Activated CD4-positive, alpha-beta T cell treated with anti-CD3 and anti-CD28 coated beads for 36 hours (primary cell): ENCODE measurements at regions of chr3 and their contacts with region 1.

Region 1: DNA sequence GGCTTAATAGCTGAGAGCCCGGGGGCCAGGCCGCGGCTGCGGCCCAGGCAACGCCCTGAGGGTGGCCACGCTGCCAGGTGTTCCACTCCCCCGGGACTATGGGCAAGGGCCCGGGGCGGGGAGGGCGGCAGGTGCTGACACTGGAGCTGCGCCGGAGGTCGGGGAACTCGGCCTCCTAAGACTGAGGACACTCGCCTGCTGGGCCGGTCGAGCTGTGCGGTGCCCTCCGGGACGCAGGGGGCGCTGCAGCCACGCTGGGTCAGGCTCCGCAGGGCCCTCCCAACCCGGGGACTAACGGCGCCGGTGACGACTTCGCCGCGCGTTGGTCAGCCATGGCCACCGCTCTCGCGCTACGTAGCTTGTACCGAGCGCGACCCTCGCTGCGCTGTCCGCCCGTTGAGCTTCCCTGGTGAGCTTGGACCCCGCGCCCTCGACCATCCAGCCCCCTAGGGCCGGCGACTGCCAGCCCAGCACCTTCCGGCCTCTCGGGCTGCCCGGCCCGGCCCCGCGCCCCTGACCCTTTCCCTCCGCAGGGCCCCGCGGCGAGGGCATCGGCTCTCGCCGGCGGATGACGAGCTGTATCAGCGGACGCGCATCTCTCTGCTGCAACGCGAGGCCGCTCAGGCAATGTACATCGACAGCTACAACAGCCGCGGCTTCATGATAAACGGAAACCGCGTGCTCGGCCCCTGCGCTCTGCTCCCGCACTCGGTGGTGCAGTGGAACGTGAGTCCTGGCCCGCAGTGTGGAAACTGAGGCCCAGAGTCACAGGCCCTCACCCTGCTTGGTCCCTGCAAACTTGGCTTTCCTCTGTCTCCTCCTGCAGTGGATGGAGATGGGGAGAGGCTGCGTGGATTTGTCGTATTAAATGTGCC is at the start of gene NDUFAF3:
- DNase-seq: peak; percentile 96
- ATAC-seq: peak; percentile 78
- H3K4me3 Mint-ChIP-seq: peak within 1 kb of the TSS; percentile 95
- H3K27ac Mint-ChIP-seq: peak within 1 kb of the TSS; percentile 96
- H3K4me1 Mint-ChIP-seq: peaks cover 60% of the 10 kb centered on the region
- H3K27me3 Mint-ChIP-seq: no peaks in the 10 kb centered on the region
- total RNA-seq, gene NDUFAF3: 90.8 to 108 TPM

Region 2: GRCh38 chr3:48465531-48466378 is 556.3 kb before region 1 on chr3:
- CTCF ChIA-PET with region 1: no interaction called
- POLR2A ChIA-PET with region 1: no interaction called
- intact Hi-C with region 1: no loop called
- DNase-seq: peak; percentile 90
- ATAC-seq: peak; percentile 92
- H3K4me3 Mint-ChIP-seq: peak overlapping the region; percentile 93
- H3K27ac Mint-ChIP-seq: peak overlapping the region; percentile 96
- H3K4me1 Mint-ChIP-seq: peaks cover 46% of the 10 kb centered on the region
- H3K27me3 Mint-ChIP-seq: no peaks in the 10 kb centered on the region

Region 3: DNA sequence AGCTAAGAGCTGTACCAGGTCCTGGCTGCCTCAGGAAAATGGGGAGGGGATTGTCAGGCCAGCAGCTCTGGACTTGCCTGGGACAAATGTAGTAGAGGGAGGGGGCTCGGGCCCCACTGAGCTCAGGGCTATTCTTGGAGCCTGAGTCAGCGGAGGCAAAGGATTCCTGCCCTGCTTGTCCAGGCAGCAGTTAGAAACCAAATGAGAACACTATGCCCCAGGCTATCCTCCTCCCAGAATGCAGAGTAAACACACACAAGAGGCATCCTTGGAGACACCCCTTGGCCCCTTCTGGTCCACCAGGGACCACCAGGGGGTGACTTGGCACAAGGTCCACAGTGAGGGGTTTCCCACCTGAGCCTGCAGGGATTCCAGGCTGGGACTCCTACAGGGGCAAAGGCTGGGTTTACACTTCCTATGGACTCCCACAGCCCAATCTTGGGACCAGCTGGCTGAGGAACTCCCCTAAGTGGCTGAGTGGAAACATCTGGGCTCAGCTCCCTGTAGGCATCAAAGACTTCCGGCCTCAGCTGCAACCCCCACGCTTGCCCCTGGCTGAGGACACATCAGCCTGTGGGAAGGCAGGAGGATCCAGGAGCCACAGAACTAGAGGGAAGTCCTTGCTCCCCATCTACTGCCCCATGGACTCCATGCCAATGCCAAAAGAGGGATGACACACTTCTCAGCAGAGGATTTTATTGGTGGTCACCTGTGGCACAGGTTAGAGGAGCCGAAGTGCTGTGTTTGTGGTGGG is 423.6 kb before region 1 on chr3:
- CTCF ChIA-PET with region 1: no interaction called
- POLR2A ChIA-PET with region 1: no interaction called
- intact Hi-C with region 1: no loop called
- DNase-seq: no peak
- ATAC-seq: no peak
- H3K4me3 Mint-ChIP-seq: no peak overlapping the region
- H3K27ac Mint-ChIP-seq: no peak overlapping the region
- H3K4me1 Mint-ChIP-seq: no peaks in the 10 kb centered on the region
- H3K27me3 Mint-ChIP-seq: peaks cover 10% of the 10 kb centered on the region

Region 4: DNA sequence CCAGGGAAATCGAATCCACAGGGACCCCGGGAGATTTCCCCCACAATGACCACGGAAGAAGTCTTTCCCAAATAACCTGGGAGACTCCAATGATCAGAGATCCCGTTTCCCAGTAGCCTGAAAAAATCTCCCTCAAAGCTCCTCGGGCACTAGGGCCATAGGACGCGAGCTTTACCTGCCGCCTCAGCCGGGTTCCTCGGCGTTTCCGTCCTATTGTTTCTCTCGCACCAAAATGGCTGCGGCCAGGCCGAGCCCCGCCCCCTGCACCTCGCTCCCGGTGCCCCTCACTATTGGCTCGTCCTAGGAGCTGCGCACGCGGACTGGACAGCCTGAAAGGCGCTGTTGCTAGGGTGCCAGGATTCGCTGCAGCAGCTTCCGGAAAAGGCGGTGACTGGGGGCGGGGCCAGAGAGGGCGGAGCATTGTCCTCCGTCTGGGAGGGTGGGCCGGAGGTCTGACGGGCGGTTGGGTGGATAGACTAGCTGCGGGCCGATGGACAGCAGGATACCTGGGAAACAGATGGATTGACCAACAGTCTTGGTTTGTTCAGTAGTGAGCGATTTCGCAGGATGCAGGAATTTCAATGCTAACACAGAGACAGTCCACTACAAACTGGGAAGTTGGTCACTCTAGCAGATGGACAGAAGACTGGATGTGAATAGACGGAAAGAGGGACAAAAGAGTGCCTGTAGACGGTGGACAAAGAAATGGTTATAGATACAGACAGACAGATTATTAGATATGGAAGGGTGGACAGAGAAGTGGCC is 304.9 kb before region 1 on chr3 and contains the start of gene IP6K2:
- CTCF ChIA-PET with region 1: no interaction called
- POLR2A ChIA-PET with region 1: no interaction called
- intact Hi-C with region 1: loop called in 1 of 2 experiments (anchors 1 kb)
- DNase-seq: peak; percentile 99
- ATAC-seq: peak; percentile 100
- H3K4me3 Mint-ChIP-seq: peak within 1 kb of the TSS; percentile 97
- H3K27ac Mint-ChIP-seq: peak within 1 kb of the TSS; percentile 97
- H3K4me1 Mint-ChIP-seq: peaks cover 31% of the 10 kb centered on the region
- H3K27me3 Mint-ChIP-seq: no peaks in the 10 kb centered on the region
- total RNA-seq, gene IP6K2: 39.4 to 48.3 TPM

Region 5: DNA sequence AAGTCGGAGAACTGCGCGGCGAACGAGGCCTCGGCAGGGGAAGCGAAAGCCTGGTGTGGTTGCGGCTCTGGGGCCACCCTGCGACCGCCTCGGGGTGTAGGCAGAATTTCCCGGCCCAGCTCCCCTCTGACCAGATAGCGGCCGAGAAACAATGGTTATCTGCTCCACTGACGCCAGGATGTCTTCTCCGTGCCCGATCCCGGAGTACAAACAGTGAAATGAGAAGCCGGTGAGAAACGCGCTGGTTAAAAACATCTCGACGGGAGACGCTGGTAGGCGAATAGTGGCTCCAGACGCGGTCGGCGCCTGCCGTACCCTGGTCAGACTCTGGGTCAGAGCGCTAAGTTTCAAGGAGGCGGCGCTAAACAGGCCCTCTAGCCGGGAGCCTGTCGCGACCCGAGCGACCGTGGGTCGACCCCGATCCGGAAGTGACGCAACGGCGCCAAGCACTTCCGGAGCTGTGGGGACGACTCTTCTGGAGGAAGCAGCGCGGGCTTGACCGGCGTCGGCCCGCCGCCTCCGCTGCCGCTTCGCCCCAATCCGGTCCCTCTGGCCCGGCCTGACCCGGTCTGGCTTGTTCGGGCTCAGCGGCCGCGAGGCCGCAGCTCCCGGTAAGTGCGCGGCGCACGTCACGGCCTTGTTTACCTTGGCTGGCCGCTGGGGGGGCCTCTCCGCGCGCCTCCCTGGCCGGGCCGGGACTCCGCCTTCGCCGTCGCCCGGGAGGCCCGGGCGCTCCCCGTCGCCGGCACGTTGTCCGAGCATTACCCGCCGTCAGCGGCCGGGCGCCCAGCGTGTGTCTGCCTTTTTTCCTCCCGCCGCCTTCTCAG is 103.4 kb before region 1 on chr3 and contains the start of gene ARIH2:
- CTCF ChIA-PET with region 1: interaction called, 4 read pairs
- POLR2A ChIA-PET with region 1: interaction called, 9 read pairs
- intact Hi-C with region 1: loop called in 1 of 2 experiments (anchors 1 kb)
- DNase-seq: peak; percentile 94
- ATAC-seq: peak; percentile 75
- H3K4me3 Mint-ChIP-seq: peak within 1 kb of the TSS; percentile 90
- H3K27ac Mint-ChIP-seq: peak within 1 kb of the TSS; percentile 100
- H3K4me1 Mint-ChIP-seq: peaks cover 30% of the 10 kb centered on the region
- H3K27me3 Mint-ChIP-seq: no peaks in the 10 kb centered on the region
- total RNA-seq, gene ARIH2: 105 to 112 TPM

Region 6: DNA sequence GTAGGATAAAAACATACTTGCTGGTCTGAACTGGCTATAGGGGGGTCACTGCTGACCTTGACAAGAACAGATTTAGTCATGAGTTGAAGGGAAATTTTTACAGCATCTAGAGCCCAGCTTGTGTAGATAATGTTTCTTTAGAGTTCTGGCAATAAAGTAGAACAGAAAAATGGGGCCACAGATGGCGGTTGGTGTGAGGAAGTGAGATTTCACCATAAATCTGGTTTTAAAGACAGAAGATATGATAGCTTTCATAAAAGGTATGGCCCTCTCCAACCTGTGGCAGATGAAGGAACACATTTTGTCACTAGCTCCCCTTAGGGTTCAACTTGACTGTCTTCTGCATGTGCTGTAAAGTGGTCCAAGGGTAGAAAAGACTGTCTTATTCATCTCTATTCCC is 31.5 kb after region 1 on chr3:
- CTCF ChIA-PET with region 1: no interaction called
- POLR2A ChIA-PET with region 1: no interaction called
- intact Hi-C with region 1: no loop called
- DNase-seq: no peak
- ATAC-seq: no peak
- H3K4me3 Mint-ChIP-seq: no peak overlapping the region
- H3K27ac Mint-ChIP-seq: no peak overlapping the region
- H3K4me1 Mint-ChIP-seq: peaks cover 2% of the 10 kb centered on the region
- H3K27me3 Mint-ChIP-seq: no peaks in the 10 kb centered on the region

Region 7: GRCh38 chr3:49120438-49121131 is 98.5 kb after region 1 on chr3 and contains the start of gene USP19:
- CTCF ChIA-PET with region 1: interaction called, 3 read pairs
- POLR2A ChIA-PET with region 1: no interaction called
- intact Hi-C with region 1: loop called in 1 of 2 experiments (anchors 1 kb)
- DNase-seq: peak; percentile 97
- ATAC-seq: peak; percentile 97
- H3K4me3 Mint-ChIP-seq: peak within 1 kb of the TSS; percentile 87
- H3K27ac Mint-ChIP-seq: peak within 1 kb of the TSS; percentile 88
- H3K4me1 Mint-ChIP-seq: peaks cover 19% of the 10 kb centered on the region
- H3K27me3 Mint-ChIP-seq: no peaks in the 10 kb centered on the region
- total RNA-seq, gene USP19: 45.2 to 45.9 TPM

Region 8: GRCh38 chr3:49339945-49340800 is 318.1 kb after region 1 on chr3 and contains the start of gene USP4:
- CTCF ChIA-PET with region 1: interaction called, 3 read pairs
- POLR2A ChIA-PET with region 1: no interaction called
- intact Hi-C with region 1: loop called in 1 of 2 experiments (anchors 1 kb)
- DNase-seq: peak; percentile 97
- ATAC-seq: peak; percentile 89
- H3K4me3 Mint-ChIP-seq: peak within 1 kb of the TSS; percentile 99
- H3K27ac Mint-ChIP-seq: peak within 1 kb of the TSS; percentile 96
- H3K4me1 Mint-ChIP-seq: peaks cover 49% of the 10 kb centered on the region
- H3K27me3 Mint-ChIP-seq: no peaks in the 10 kb centered on the region
- total RNA-seq, gene USP4: 69.3 to 71.8 TPM

Region 9: DNA sequence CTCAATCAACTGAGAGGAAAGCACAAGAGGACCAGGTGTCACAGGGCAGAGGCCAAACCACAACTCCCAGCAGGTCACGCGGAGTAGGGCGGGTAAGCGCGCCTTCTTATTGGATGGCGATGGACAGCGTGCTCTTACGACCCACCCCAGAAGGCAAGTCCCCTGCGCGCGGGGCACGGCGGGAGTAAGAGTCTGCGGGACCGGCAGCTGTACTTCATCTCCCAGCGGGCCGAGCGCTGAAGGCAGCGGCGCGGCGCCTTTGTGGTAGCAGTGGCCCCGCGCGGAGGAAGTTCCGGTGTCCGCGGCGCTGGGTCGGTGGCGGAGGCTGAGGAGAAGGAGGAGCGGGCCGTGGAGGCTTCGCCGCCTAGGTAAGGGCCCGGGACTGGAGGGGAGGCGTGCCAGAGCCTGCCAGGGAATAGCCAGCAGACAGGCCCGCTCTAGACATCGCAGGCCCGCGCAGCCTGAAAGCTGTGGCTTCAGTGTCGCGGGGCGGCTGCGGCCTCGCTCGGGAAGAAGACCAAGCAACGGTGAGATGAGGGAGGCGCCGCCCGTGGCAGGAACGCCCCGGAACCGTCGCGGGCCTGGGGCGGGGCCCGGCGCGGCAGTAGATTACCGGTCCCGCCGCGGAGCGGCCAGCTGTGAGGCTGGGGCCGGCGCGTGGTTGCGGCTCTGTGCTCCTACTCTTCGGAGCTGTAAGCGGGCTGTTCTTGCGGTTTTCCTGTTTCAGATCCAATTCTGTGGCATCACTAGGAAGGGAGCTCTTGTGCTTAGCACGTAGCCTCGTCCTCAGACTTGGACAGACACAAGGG is 918.0 kb after region 1 on chr3 and contains the start of gene RBM6:
- CTCF ChIA-PET with region 1: no interaction called
- POLR2A ChIA-PET with region 1: no interaction called
- intact Hi-C with region 1: loop called in 1 of 2 experiments (anchors 1 kb)
- DNase-seq: peak; percentile 98
- ATAC-seq: peak; percentile 99
- H3K4me3 Mint-ChIP-seq: peak within 1 kb of the TSS; percentile 98
- H3K27ac Mint-ChIP-seq: peak within 1 kb of the TSS; percentile 91
- H3K4me1 Mint-ChIP-seq: peaks cover 20% of the 10 kb centered on the region
- H3K27me3 Mint-ChIP-seq: no peaks in the 10 kb centered on the region
- total RNA-seq, gene RBM6: 69.3 to 75.1 TPM